ENCODE measurements at regions of chr18 and their contacts with region 1.

Region 1: GRCh38 chr18:2758309-2758708 is 88.5 kb upstream of the EMILIN2 start:
- DNase-seq: no peak
- ATAC-seq: no peak

Region 2: GRCh38 chr18:2538844-2539243 is 219.5 kb before region 1 on chr18:
- intact Hi-C with region 1: no loop called
- DNase-seq: no peak
- ATAC-seq: no peak

Region 3: DNA sequence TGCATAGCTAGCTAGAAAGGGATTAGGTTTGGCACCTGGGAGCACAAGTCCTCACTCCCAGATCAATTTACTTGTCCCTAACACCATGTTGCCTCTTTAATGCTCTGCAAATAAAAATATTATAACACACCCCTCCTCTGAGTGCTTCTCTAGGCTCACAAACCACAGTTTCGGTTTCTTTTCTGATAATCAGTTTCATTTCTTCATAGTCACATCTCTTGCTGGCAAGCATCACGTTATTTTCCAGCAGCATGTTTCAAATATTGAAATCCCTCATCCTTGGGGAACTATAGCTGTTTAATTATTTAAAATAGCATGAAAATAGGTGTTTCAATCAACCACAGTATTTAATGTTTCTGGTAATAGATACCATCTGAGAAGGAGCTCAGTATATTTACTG is 116.7 kb before region 1 on chr18:
- intact Hi-C with region 1: no loop called
- DNase-seq: no peak
- ATAC-seq: no peak

Region 4: GRCh38 chr18:2716394-2717326 is 41.6 kb before region 1 on chr18:
- intact Hi-C with region 1: no loop called
- DNase-seq: no peak
- ATAC-seq: peak; percentile 94

Region 5: DNA sequence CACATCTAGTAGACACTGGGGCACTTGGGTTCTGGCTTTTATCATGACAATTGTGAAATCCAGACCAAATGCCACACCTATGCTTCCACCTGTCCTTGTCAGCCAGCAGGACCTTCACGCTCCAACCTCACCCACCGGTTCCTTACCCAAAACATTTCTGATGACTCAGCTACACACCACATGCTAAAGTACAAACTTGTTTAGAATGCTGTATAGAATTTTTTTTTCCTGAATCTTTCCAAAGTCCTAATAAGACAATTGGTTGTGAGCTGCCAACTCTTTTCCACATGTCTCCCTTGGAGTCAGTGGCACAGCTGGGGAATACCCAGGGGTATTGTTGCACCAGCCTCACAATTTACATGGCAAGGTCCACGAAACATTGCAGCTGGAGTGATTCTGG is 330.1 kb after region 1 on chr18:
- intact Hi-C with region 1: loop called (anchors 10 kb)
- DNase-seq: no peak
- ATAC-seq: no peak

Measured in Right ventricle myocardium inferior (tissue), 1 donor.